Prostate gland (tissue), 2 donors: ENCODE measurements at regions of chr9 and their contacts with region 1.

Region 1: GRCh38 chr9:129482521-129483414 is 138.1 kb downstream of the C9orf50 start:
- DNase-seq: peak; percentile 88
- H3K4me3 ChIP-seq: peak overlapping the region; percentile 51 to 53
- H3K27ac ChIP-seq: peak overlapping the region; percentile 99 to 100
- H3K4me1 ChIP-seq: peaks cover 36% of the 10 kb centered on the region
- H3K27me3 ChIP-seq: no peaks in the 10 kb centered on the region
- CTCF ChIP-seq: peak in 1 of 4 experiments; percentile 22
- POLR2A ChIP-seq: peak; percentile 19

Region 2: GRCh38 chr9:129413537-129414376 is 69.0 kb before region 1 on chr9:
- intact Hi-C with region 1: loop called (anchors 2 kb)
- DNase-seq: peak; percentile 99
- H3K4me3 ChIP-seq: peak overlapping the region; percentile 55 to 58
- H3K27ac ChIP-seq: peak overlapping the region; percentile 99
- H3K4me1 ChIP-seq: peaks cover 13% of the 10 kb centered on the region
- H3K27me3 ChIP-seq: no peaks in the 10 kb centered on the region
- CTCF ChIP-seq: peak in 2 of 4 experiments; percentile 18 to 23
- POLR2A ChIP-seq: peak; percentile 94

Region 3: DNA sequence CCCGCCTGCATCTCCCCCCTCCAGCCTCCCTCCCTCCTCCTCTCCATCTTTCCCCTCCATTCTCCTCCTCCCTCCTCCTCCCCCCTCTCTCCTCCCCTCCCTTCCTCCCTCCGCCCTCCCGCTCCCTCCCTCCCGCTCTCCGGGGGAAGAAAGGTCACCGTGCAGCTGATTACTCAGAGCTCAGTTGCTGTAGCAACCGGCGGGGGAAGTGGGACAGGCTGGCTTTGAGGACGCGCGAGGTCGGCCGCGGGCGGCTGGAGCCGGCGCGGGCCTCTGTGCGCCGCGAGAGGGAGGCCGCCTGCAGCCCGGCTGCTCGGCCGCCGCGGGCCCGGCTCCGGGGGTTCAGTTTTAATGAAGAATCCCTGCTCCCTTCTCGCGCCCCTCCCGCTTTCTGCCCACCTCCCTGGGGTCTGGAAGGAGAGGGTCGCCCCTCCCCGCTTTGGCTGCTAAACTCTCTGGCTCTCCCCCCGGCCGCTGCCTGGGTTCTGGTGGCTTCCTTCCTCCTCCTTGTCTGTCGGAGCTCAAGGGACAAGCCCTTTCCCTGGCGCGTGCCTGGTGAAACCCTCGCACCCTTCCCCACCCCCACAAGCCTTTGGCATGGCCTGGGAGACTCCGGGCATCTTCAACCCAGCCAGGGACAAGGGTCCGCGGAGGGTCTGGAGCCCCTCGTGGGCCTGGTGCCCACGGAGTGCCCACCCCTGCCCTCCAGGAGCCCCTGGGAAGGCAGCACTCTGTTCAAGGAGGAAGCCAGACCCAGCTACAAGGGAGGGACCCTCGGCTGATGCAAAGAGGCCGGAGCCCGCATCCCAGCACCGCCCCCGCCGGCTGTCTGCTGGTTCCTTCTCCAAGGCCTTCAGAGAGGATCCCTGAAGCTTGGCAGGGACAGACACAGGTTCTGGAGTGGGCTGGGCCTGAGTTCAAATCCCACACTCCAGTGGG is 22.2 kb before region 1 on chr9:
- intact Hi-C with region 1: loop called (anchors 2 kb)
- DNase-seq: peak; percentile 93
- H3K4me3 ChIP-seq: peak overlapping the region; percentile 18 to 31
- H3K27ac ChIP-seq: peak overlapping the region; percentile 94 to 98
- H3K4me1 ChIP-seq: peaks cover 20% of the 10 kb centered on the region
- H3K27me3 ChIP-seq: no peaks in the 10 kb centered on the region
- CTCF ChIP-seq: peak in 2 of 4 experiments; percentile 29 to 46
- POLR2A ChIP-seq: peak; percentile 80

Region 4: GRCh38 chr9:129597355-129598088 is 114.8 kb after region 1 on chr9:
- intact Hi-C with region 1: loop called (anchors 5 kb)
- DNase-seq: peak; percentile 66
- H3K4me3 ChIP-seq: peak overlapping the region; percentile 14 to 36
- H3K27ac ChIP-seq: peak overlapping the region; percentile 80 to 93
- H3K4me1 ChIP-seq: peaks cover 9% of the 10 kb centered on the region
- H3K27me3 ChIP-seq: no peaks in the 10 kb centered on the region
- CTCF ChIP-seq: peak in 1 of 4 experiments; percentile 17
- POLR2A ChIP-seq: peak; percentile 22